Head of caudate nucleus (tissue), 42 donors: ENCODE measurements at regions of chr1 and their contacts with region 1.

Region 1: GRCh38 chr1:213987927-213988506 is at the start of gene PROX1:
- DNase-seq: peak in 9 of 42 donors; percentile 34 to 91 (median 79)

Region 2: DNA sequence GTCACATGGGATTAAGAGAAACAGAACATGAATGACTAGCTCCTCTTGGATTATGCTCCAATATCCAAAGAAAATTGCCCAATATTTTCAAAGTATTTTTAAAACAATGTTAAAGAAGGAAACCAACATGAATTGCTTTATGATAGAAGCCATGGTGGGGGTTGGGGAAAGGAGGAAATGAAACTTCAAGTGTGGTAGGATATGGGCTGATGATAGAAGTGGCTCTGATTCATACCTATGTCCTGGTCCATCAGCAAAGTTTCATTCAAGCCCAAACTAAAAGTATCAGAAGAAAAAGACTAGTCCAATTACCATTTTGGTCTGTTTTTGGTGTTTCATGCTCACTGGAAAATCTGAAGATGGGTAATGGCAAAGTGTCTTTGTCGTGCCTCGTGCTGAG is 104.4 kb before region 1 on chr1:
- intact Hi-C with region 1: loop called (anchors 10 kb)
- DNase-seq: no peak

Region 3: DNA sequence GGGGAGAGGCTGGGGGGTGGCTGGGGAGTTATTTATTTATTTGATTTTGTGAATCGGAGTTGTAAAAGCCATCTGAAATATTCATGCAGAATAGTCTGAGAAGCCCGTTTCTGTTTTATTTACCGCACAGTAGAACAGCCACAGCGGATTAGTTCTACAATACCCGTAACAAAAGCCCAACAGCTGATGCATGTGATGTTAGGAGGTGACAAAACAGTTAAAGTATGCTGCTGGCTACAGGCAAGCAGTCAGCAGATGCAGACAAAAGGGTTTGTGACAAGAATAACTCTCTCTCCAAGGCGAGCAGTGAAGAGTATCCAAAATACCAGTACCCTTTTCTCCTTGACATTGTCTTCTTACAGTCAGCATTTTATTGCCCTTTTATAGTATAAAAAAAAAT is 41.8 kb after region 1 on chr1:
- intact Hi-C with region 1: no loop called
- DNase-seq: peak in 1 of 42 donors; percentile 56

Region 4: GRCh38 chr1:214427871-214428277 is 439.9 kb after region 1 on chr1:
- intact Hi-C with region 1: no loop called
- DNase-seq: no peak